Activated CD4-positive, alpha-beta T cell treated with anti-CD3 and anti-CD28 coated beads for 36 hours (primary cell): ENCODE measurements at regions of chr6 and their contacts with region 1.

Region 1: DNA sequence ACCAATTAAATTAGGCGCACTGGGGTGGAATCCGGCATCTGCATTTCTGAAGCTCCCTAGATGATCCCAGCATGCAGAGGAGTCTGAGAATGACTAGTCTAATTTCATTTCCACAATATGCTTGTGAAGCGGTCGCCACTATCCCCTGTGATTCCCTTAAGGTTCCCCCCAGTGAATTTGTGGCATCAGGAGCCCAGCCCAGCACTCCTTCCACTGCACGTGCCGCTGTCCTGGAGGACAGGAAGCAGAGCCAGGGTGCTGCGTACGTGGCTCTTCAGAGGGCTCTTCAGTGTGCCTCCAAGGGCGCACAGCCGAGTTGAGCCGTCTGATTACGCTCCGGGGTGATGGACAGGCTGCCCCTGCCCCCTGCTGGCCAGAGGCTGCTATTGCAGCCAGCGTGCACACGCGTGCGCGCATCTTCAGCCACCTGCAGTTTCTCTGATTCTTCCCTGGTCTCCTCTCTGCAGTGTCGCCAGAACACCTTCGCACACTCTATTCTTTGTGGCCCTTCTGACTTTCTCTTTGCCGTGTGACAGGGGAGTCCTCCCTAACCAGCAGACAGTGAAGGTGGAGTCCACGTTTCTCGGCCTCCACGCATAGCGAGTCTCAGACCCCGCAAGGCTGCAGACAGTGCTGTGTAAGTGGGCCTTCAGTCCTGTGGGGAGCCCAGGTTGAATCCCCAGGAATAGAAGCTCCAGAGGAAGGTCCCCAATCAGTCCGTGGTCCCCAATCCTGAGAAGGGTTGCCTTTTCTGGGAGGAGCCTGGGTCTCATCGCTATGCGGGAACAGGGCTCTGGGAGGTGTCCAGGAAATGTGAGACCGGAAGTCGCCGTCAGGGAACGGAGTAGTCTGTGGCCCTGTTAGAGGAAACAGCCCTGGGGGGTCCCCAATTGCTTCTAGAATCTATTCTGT is 16.5 kb upstream of the NCR2 start:
- DNase-seq: peak; percentile 91
- ATAC-seq: peak; percentile 95
- H3K4me3 Mint-ChIP-seq: peak overlapping the region; percentile 50
- H3K27ac Mint-ChIP-seq: peak overlapping the region; percentile 72
- H3K4me1 Mint-ChIP-seq: peaks cover 15% of the 10 kb centered on the region
- H3K27me3 Mint-ChIP-seq: peaks cover 9% of the 10 kb centered on the region

Region 2: GRCh38 chr6:41008011-41008410 is 310.9 kb before region 1 on chr6:
- CTCF ChIA-PET with region 1: no interaction called
- POLR2A ChIA-PET with region 1: no interaction called
- intact Hi-C with region 1: loop called (anchors 1 to 5 kb)
- DNase-seq: no peak
- ATAC-seq: no peak
- H3K4me3 Mint-ChIP-seq: no peak overlapping the region
- H3K27ac Mint-ChIP-seq: no peak overlapping the region
- H3K4me1 Mint-ChIP-seq: no peaks in the 10 kb centered on the region
- H3K27me3 Mint-ChIP-seq: peaks cover 11% of the 10 kb centered on the region

Region 3: GRCh38 chr6:41027799-41028628 is 290.9 kb before region 1 on chr6:
- CTCF ChIA-PET with region 1: interaction called, 3 read pairs
- POLR2A ChIA-PET with region 1: no interaction called
- intact Hi-C with region 1: loop called in 1 of 2 experiments (anchors 5 kb)
- DNase-seq: peak; percentile 89
- ATAC-seq: peak; percentile 88
- H3K4me3 Mint-ChIP-seq: peak overlapping the region; percentile 73
- H3K27ac Mint-ChIP-seq: peak overlapping the region; percentile 77
- H3K4me1 Mint-ChIP-seq: peaks cover 17% of the 10 kb centered on the region
- H3K27me3 Mint-ChIP-seq: no peaks in the 10 kb centered on the region

Region 4: DNA sequence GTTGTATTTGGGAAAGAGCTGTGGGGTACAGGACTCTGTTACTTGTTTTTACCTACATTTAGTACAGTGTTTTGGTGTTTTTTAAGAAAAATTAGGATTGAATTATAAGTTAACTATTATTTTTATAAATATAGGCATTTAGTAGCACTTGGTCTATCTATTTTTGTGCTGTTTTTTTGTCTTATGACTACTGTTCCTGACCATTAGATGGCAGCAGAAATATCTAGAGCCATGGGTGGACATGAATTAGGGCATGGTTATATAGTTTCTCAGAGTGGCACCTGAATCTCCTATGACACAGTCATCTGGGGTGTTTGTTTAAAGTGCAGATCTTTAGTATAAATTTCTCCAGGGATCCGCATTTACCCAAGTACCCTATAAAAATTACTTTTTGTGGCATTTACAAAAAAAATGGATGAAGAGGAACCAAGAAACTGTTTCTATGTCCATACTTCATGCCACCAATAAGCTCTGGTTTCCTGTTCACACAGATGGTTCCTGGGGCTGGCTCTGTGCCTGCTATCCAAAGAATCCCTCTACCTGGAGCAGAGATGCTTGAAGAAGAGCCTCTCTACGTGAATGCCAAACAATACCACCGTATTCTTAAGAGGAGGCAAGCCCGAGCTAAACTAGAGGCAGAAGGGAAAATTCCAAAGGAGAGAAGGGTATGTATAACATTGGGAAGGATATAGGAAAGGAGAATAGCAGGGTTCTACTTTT is 226.3 kb before region 1 on chr6:
- CTCF ChIA-PET with region 1: interaction called, 4 read pairs
- POLR2A ChIA-PET with region 1: no interaction called
- intact Hi-C with region 1: loop called in 1 of 2 experiments (anchors 5 kb)
- DNase-seq: no peak
- ATAC-seq: peak; percentile 36
- H3K4me3 Mint-ChIP-seq: no peak overlapping the region
- H3K27ac Mint-ChIP-seq: no peak overlapping the region
- H3K4me1 Mint-ChIP-seq: no peaks in the 10 kb centered on the region
- H3K27me3 Mint-ChIP-seq: no peaks in the 10 kb centered on the region

Region 5: GRCh38 chr6:41191569-41191968 is 127.3 kb before region 1 on chr6:
- CTCF ChIA-PET with region 1: interaction called, 15 read pairs
- POLR2A ChIA-PET with region 1: no interaction called
- intact Hi-C with region 1: loop called (anchors 1 to 2 kb)
- DNase-seq: peak; percentile 71
- ATAC-seq: peak; percentile 75
- H3K4me3 Mint-ChIP-seq: no peak overlapping the region
- H3K27ac Mint-ChIP-seq: no peak overlapping the region
- H3K4me1 Mint-ChIP-seq: peaks cover 9% of the 10 kb centered on the region
- H3K27me3 Mint-ChIP-seq: no peaks in the 10 kb centered on the region

Region 6: DNA sequence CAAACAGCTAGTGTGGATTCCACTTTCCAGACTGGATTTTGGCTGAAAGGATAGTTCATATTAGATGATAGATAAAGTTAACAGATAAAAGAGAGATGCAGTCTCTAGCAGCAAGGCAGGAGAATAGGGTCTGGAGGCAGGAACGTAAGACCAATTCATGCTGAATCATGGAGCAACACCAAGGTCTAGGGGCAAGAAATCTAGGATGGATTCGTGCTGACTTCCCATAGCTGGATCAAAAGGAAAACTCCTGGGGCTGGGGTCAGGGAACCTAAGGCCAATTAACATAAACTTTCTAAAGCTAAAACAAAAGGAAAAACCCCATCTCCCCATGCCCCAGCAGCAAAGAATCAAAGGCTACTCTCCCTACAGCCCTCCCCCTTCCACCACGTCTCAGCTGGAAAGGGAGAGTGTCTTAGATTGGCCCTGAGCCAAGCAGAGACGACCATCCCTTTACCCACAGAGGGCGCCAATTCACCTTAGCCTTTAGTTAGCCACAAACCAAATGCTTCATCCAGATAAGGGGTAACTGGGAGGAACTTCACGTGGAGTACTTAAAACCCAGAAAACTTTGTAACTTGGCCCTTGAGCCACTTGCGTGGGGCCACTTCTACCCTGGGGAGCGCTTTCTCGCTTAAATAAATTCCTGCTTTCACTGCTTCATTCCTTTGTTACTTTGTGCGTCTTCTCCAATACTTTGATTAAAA is 40.1 kb before region 1 on chr6:
- CTCF ChIA-PET with region 1: interaction called, 15 read pairs
- POLR2A ChIA-PET with region 1: no interaction called
- intact Hi-C with region 1: loop called (anchors 1 kb)
- DNase-seq: peak; percentile 79
- ATAC-seq: peak; percentile 92
- H3K4me3 Mint-ChIP-seq: no peak overlapping the region
- H3K27ac Mint-ChIP-seq: peak overlapping the region; percentile 39
- H3K4me1 Mint-ChIP-seq: peaks cover 11% of the 10 kb centered on the region
- H3K27me3 Mint-ChIP-seq: peaks cover 3% of the 10 kb centered on the region

Region 7: GRCh38 chr6:41306187-41306854 is 12.6 kb before region 1 on chr6:
- CTCF ChIA-PET with region 1: interaction called, 76 read pairs
- POLR2A ChIA-PET with region 1: no interaction called
- intact Hi-C with region 1: loop called (anchors 1 to 2 kb)
- DNase-seq: peak; percentile 59
- ATAC-seq: no peak
- H3K4me3 Mint-ChIP-seq: no peak overlapping the region
- H3K27ac Mint-ChIP-seq: no peak overlapping the region
- H3K4me1 Mint-ChIP-seq: peaks cover 9% of the 10 kb centered on the region
- H3K27me3 Mint-ChIP-seq: no peaks in the 10 kb centered on the region